ENCODE measurements at regions of chr2 and their contacts with region 1.

Region 1: DNA sequence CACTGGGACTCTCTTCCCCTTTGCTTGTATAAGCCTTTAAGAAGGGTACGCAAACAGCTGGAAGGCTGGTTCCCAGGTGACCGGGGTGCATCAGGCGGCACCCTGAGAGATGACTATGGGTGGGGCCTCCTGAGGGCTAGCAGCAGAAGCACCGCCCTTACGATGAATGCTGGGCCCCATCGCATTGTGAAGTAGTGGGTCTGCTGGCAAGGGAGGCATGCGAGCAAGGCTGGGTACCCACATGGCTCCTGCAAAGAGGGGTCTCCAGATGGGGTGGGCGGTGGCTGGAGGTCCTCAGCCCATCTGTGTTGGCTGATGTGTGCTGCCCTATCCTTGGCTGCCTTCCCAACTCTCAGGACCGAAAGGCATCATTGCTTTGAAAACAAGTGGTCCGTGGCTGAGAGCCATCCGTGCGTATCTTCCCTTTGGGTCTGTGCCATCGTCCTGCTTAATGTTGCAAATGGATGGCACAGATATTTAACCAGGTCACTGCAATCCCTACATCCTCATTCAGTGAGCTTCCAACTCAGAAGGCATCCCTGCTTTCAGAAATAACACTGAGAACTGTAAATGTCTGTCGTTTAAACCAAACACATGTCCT is 83.5 kb upstream of the GPC1 start:
- DNase-seq: no peak

Region 2: GRCh38 chr2:240300261-240300821 is 51.6 kb before region 1 on chr2:
- intact Hi-C with region 1: loop called (anchors 5 kb)
- DNase-seq: peak; percentile 61

Region 3: GRCh38 chr2:240873805-240874714 is 522.1 kb after region 1 on chr2:
- intact Hi-C with region 1: no loop called
- DNase-seq: peak; percentile 62